ENCODE measurements at regions of chr4 and their contacts with region 1.

Region 1: GRCh38 chr4:186021461-186022167 is 47.3 kb upstream of the TLR3 start:
- DNase-seq: peak; percentile 33 to 69 (median 55)
- H3K4me3 ChIP-seq: peak overlapping the region in 1 of 4 donors; percentile 29
- H3K27ac ChIP-seq: peak overlapping the region in 3 of 5 donors; percentile 13 to 77 (median 71)
- H3K4me1 ChIP-seq: peaks cover 10 to 23% of the 10 kb centered on the region in 2 donors
- H3K27me3 ChIP-seq: no peaks in the 10 kb centered on the region
- CTCF ChIP-seq: peak; percentile 74 to 96 (median 88)
- POLR2A ChIP-seq: peak in 1 of 2 donors; percentile 24

Region 2: DNA sequence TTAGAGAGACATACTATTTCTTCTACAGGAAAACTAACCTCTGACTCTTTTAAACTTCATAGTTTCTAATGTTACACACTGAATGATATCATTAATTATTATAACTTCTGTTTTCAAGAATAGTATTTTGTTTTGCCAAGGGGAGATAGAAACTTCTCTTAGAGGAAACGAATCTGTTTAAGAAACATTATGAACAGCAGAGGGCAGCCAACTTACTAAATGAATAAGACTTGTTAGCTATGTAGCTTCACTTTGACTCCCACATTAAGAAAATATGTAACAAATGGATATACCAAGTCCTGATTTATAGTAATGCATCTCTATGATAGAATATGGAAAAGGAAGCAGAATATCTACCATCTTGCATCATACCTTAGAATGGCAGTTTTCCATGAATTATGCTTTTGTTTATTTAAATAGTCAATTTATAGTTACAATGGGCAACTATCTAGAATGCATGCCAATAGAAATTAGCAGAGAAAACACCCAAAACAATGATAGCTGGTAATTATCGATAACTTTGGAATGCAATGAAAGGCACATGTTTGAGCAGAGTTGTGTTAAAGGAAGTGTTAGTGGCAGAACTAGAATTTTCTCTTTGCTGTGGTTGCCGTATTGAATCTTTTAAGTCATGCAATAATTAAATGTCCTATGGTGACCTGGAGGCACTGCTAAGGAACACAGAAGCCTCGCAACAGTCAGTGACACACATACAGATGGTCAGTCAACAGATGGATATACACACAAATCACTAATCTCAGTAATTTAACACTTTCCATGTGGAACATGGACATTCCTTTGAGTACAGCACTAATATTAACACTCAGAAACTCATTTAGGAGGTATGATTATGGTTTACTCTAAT is 380.6 kb before region 1 on chr4:
- intact Hi-C with region 1: loop called (anchors 10 kb)
- DNase-seq: no peak
- H3K4me3 ChIP-seq: no peak overlapping the region
- H3K27ac ChIP-seq: peak overlapping the region in 4 of 5 donors; percentile 8 to 23 (median 17)
- H3K4me1 ChIP-seq: peaks cover 0 to 38% of the 10 kb centered on the region in 2 donors
- H3K27me3 ChIP-seq: no peaks in the 10 kb centered on the region
- CTCF ChIP-seq: peak; percentile 14 to 61 (median 42)
- POLR2A ChIP-seq: no peak

Region 3: GRCh38 chr4:185782523-185782922 is 239.1 kb before region 1 on chr4:
- intact Hi-C with region 1: loop called in 1 of 2 experiments (anchors 10 kb)
- DNase-seq: no peak
- H3K4me3 ChIP-seq: no peak overlapping the region
- H3K27ac ChIP-seq: no peak overlapping the region
- H3K4me1 ChIP-seq: peaks cover 11 to 18% of the 10 kb centered on the region in 2 donors
- H3K27me3 ChIP-seq: no peaks in the 10 kb centered on the region
- CTCF ChIP-seq: no peak
- POLR2A ChIP-seq: no peak

Region 4: DNA sequence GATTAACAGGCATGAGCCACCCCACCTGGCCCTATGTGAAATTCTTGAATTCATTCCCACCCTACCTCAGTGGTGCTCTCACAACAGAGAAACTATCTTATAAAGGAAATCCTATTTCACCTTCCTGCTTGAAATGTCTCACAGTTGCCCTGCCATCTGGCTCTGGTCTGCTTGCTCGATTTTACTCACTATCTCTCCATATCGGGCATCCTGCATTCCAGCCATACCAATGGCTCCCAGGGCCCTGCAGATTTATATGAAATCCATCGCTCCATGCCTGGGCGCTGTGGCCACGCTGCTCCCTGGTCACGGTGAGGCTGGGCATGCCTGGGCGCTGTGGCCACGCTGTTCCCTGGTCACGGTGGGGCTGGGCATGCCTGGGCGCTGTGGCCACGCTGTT is 225.4 kb before region 1 on chr4:
- intact Hi-C with region 1: no loop called
- DNase-seq: no peak
- H3K4me3 ChIP-seq: no peak overlapping the region
- H3K27ac ChIP-seq: no peak overlapping the region
- H3K4me1 ChIP-seq: no peaks in the 10 kb centered on the region
- H3K27me3 ChIP-seq: no peaks in the 10 kb centered on the region
- CTCF ChIP-seq: no peak
- POLR2A ChIP-seq: no peak

Region 5: DNA sequence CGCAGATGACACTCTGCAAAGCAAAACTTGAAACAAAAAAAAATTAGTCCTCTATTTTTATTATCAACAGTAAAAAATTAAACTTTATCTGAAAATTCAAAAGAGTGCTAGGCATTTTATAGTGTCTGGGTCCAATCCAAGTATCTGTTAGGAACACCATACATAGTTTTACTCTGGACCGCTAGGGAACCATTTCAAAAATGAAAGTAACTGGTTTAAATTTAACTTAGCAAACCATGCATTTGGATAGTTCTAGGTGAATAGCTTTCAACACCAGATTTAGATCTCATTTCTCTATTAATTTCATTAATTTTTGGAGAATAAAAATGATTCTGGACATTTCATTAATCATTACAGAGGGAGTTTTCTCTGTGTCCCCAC is 206.9 kb after region 1 on chr4:
- intact Hi-C with region 1: no loop called
- DNase-seq: no peak
- H3K4me3 ChIP-seq: no peak overlapping the region
- H3K27ac ChIP-seq: no peak overlapping the region
- H3K4me1 ChIP-seq: no peaks in the 10 kb centered on the region
- H3K27me3 ChIP-seq: no peaks in the 10 kb centered on the region
- CTCF ChIP-seq: no peak
- POLR2A ChIP-seq: no peak

Measured in adrenal gland (tissue), 19 donors.